ENCODE measurements at regions of chr14 and their contacts with region 1.

Region 1: DNA sequence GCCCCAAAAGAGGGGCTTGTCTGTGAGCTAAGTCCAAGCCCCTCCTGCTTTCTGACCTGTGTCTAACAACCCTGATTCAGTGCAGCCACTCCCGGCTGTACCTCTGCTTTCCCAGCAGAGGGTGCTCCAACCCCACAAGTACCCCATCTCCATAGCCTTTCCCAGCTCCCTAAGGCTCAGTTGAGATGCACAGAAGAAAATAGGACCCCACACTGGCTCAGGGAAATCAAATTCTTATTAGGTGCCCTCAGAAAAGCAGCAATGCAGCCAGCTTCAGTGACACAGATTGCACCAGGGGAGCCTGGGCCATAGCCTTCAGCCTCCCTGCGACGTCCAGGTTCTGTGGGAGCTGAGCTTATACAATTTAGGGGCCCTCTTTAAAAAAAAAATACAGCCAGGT is 49.9 kb downstream of the LRRC74A start:
- DNase-seq: peak in 4 of 5 donors; percentile 54 to 65 (median 62)
- ATAC-seq: peak; percentile 75 to 90 (median 88)
- H3K4me3 ChIP-seq: no peak overlapping the region
- H3K27ac ChIP-seq: no peak overlapping the region
- H3K4me1 ChIP-seq: peaks cover 0 to 5% (median 0%) of the 10 kb centered on the region in 12 donors
- H3K27me3 ChIP-seq: no peaks in the 10 kb centered on the region
- CTCF ChIP-seq: peak; percentile 84 to 98 (median 92)
- POLR2A ChIP-seq: no peak

Region 2: GRCh38 chr14:76710056-76711010 is 165.7 kb before region 1 on chr14:
- intact Hi-C with region 1: loop called in 1 of 10 experiments (anchors 5 kb)
- DNase-seq: peak in 1 of 5 donors; percentile 35
- ATAC-seq: peak in 3 of 4 donors; percentile 35 to 72 (median 66)
- H3K4me3 ChIP-seq: no peak overlapping the region
- H3K27ac ChIP-seq: peak overlapping the region in 1 of 12 donors; percentile 30
- H3K4me1 ChIP-seq: peaks cover 0 to 18% (median 10%) of the 10 kb centered on the region in 12 donors
- H3K27me3 ChIP-seq: no peaks in the 10 kb centered on the region
- CTCF ChIP-seq: peak; percentile 71 to 86 (median 76)
- POLR2A ChIP-seq: no peak

Region 3: GRCh38 chr14:77067632-77068514 is 191.8 kb after region 1 on chr14:
- intact Hi-C with region 1: loop called (anchors 1 to 5 kb)
- DNase-seq: peak; percentile 66 to 85 (median 74)
- ATAC-seq: peak; percentile 60 to 84 (median 78)
- H3K4me3 ChIP-seq: no peak overlapping the region
- H3K27ac ChIP-seq: peak overlapping the region in 5 of 12 donors; percentile 8 to 72 (median 39)
- H3K4me1 ChIP-seq: peaks cover 3 to 49% (median 28%) of the 10 kb centered on the region in 12 donors
- H3K27me3 ChIP-seq: no peaks in the 10 kb centered on the region
- CTCF ChIP-seq: peak; percentile 72 to 95 (median 84)
- POLR2A ChIP-seq: no peak

Region 4: GRCh38 chr14:77097700-77098528 is 221.8 kb after region 1 on chr14 and contains the start of gene CIPC:
- intact Hi-C with region 1: loop called in 5 of 10 experiments (anchors 1 to 5 kb)
- DNase-seq: peak; percentile 100
- ATAC-seq: peak; percentile 89 to 96 (median 92)
- H3K4me3 ChIP-seq: peak within 1 kb of the TSS; percentile 64 to 92 (median 74)
- H3K27ac ChIP-seq: peak within 1 kb of the TSS; percentile 96 to 99 (median 98)
- H3K4me1 ChIP-seq: peaks cover 3 to 64% (median 45%) of the 10 kb centered on the region in 12 donors
- H3K27me3 ChIP-seq: no peaks in the 10 kb centered on the region
- CTCF ChIP-seq: no peak
- POLR2A ChIP-seq: peak; percentile 28 to 67
- total RNA-seq, gene CIPC: 44.5 to 85.9 (median 66.7) TPM

Region 5: DNA sequence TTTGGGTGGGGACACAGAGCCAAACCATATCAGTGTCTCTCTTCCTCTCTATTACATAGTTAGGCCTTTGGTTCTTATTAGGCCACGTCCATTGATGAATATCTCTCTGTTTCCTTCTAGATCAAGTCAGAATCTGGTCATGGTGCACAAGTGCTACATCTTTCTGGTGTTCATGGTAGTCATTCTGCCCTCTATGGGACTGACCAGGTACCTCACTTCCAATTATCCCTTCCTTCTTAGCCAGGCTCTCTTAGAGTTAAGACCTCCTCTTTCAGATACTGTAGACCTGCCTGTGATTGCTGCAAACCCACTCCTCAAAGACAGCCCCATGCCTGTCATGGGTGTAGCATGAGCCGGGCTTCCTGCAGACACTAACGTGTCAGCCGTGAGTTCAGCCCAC is 369.7 kb after region 1 on chr14:
- intact Hi-C with region 1: no loop called
- DNase-seq: no peak
- ATAC-seq: no peak
- H3K4me3 ChIP-seq: no peak overlapping the region
- H3K27ac ChIP-seq: no peak overlapping the region
- H3K4me1 ChIP-seq: no peaks in the 10 kb centered on the region
- H3K27me3 ChIP-seq: peaks cover 0 to 3% (median 0%) of the 10 kb centered on the region in 9 donors
- CTCF ChIP-seq: no peak
- POLR2A ChIP-seq: no peak

Region 6: GRCh38 chr14:77314043-77314442 is 438.0 kb after region 1 on chr14:
- intact Hi-C with region 1: loop called in 9 of 10 experiments (anchors 2 to 10 kb)
- DNase-seq: no peak
- ATAC-seq: no peak
- H3K4me3 ChIP-seq: no peak overlapping the region
- H3K27ac ChIP-seq: peak overlapping the region in 1 of 12 donors; percentile 60
- H3K4me1 ChIP-seq: peaks cover 0 to 42% (median 15%) of the 10 kb centered on the region in 12 donors
- H3K27me3 ChIP-seq: no peaks in the 10 kb centered on the region
- CTCF ChIP-seq: no peak
- POLR2A ChIP-seq: no peak

Measured in heart left ventricle (tissue), 16 donors.